Left ventricle myocardium inferior (tissue), 1 donor: ENCODE measurements at regions of chr5 and their contacts with region 1.

Region 1: GRCh38 chr5:147454996-147455677 is 54.7 kb downstream of the DPYSL3 start:
- DNase-seq: no peak
- H3K4me3 ChIP-seq: peak overlapping the region; percentile 77
- H3K27ac ChIP-seq: peak overlapping the region; percentile 86
- H3K4me1 ChIP-seq: peaks cover 49% of the 10 kb centered on the region
- H3K27me3 ChIP-seq: peaks cover 21% of the 10 kb centered on the region
- CTCF ChIP-seq: no peak

Region 2: GRCh38 chr5:147554271-147554817 is 99.2 kb after region 1 on chr5:
- intact Hi-C with region 1: loop called (anchors 5 kb)
- DNase-seq: no peak
- H3K4me3 ChIP-seq: peak overlapping the region; percentile 34
- H3K27ac ChIP-seq: peak overlapping the region; percentile 73
- H3K4me1 ChIP-seq: peaks cover 29% of the 10 kb centered on the region
- H3K27me3 ChIP-seq: no peaks in the 10 kb centered on the region
- CTCF ChIP-seq: no peak

Region 3: DNA sequence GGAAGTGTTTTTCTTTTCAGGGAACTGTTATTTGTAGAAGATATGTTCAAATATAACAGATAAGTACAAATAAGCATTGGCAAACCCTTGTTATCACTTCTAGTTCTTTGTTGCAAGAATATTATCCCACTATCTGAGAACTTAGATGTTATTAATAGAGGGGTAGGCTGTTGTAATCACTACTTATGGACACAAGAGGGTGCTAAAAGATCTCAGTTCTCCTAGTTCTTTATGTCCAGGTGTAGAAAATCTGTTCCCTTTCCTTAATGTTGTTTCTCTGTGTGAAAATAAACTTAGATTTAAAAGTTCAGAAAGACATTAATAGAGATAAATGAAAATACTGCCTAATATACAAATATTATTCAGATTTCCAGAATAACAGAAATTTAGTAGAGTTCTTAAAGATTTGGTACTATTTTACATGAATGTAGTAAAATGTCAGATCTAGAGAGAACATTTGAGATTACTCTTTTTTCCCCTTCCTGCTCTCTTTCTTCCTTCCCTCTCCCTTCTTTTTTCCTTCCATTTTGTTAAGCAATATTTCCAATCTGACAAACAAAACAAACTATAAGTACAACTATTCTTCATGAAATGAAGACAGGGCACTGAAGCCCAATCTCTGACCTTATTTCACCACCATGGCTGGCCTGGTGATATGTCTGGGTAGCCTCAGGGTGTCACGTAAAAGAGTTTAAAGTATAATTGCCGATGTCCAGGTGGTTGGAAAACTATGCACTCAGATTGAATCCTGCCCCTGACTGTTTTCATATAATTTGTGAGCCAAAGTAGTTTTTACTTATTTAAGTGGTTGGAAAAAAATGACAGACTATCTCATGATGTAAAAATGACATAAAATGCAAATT is 494.8 kb after region 1 on chr5:
- intact Hi-C with region 1: no loop called
- DNase-seq: no peak
- H3K4me3 ChIP-seq: no peak overlapping the region
- H3K27ac ChIP-seq: no peak overlapping the region
- H3K4me1 ChIP-seq: no peaks in the 10 kb centered on the region
- H3K27me3 ChIP-seq: no peaks in the 10 kb centered on the region
- CTCF ChIP-seq: peak; percentile 78